ENCODE measurements at regions of chr10 and their contacts with region 1.

Region 1: GRCh38 chr10:104308439-104308903 is 29.8 kb downstream of the ITPRIP start:
- DNase-seq: peak; percentile 61
- ATAC-seq: peak; percentile 80
- H3K4me3 Mint-ChIP-seq: no peak overlapping the region
- H3K27ac Mint-ChIP-seq: peak overlapping the region; percentile 76
- H3K4me1 Mint-ChIP-seq: peaks cover 62% of the 10 kb centered on the region
- H3K27me3 Mint-ChIP-seq: no peaks in the 10 kb centered on the region

Region 2: DNA sequence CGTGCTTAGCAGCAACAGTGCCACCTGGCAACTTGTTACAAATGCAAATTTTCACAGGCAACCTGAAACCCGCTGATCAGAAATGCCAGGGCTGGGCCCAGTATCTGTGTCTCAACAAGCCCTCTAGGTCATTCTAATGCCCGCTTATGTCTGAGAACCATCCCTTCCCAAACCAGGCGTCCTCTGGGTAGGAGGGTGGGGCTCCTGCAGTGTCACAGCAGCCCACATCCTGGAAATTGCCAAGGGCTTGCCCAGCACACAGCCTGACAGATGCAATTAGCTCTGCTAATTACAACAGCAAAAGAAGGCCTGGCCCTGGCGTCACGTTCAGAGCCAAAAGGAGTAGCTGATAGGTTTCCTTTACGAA is 13.9 kb after region 1 on chr10:
- CTCF ChIA-PET with region 1: interaction called, 27 read pairs
- POLR2A ChIA-PET with region 1: interaction called, 6 read pairs
- intact Hi-C with region 1: no loop called
- DNase-seq: peak; percentile 64
- ATAC-seq: peak; percentile 64
- H3K4me3 Mint-ChIP-seq: peak overlapping the region; percentile 51
- H3K27ac Mint-ChIP-seq: peak overlapping the region; percentile 87
- H3K4me1 Mint-ChIP-seq: peaks cover 93% of the 10 kb centered on the region
- H3K27me3 Mint-ChIP-seq: no peaks in the 10 kb centered on the region

Region 3: DNA sequence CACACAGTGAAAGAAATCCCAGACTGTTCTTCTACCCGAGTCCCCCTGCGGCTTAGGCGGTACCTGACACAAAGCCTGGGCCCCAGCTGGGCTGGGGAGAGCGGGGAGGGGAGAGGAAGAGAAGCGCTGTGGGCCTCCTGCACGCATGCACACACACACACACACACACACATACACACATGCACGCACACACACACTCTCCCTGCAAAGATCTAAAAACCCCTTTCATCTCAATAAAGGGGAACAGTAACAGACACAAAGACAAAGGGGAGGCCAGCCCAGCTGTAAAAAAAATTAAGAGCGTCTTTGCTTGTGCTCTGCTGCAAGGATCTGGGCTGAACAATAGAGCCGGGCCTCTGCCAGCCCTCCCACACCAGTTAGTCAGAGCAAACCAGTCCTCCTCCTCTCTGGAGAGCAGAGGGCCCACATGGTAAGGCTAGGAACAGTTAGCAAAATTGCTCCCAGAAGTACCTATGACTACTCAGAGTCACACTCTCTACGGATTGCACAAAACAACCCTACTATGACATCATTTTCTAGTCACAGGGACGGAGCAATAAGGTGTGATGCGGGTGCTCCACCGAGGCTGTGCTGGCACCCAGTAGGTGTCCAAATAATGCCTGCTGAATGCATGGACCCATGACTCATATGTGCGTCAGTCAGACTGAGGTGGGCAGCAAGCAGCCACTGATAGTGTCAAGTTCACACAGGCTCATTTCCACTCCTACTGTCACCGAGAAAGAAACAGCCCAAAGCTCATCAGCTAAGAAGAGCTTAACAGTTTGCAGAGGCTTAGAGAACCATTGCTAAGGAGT is 20.6 kb after region 1 on chr10:
- CTCF ChIA-PET with region 1: interaction called, 54 read pairs
- POLR2A ChIA-PET with region 1: interaction called, 3 read pairs
- intact Hi-C with region 1: loop called (anchors 1 kb)
- DNase-seq: peak; percentile 89
- ATAC-seq: peak; percentile 92
- H3K4me3 Mint-ChIP-seq: peak overlapping the region; percentile 75
- H3K27ac Mint-ChIP-seq: peak overlapping the region; percentile 89
- H3K4me1 Mint-ChIP-seq: peaks cover 98% of the 10 kb centered on the region
- H3K27me3 Mint-ChIP-seq: no peaks in the 10 kb centered on the region

Region 4: DNA sequence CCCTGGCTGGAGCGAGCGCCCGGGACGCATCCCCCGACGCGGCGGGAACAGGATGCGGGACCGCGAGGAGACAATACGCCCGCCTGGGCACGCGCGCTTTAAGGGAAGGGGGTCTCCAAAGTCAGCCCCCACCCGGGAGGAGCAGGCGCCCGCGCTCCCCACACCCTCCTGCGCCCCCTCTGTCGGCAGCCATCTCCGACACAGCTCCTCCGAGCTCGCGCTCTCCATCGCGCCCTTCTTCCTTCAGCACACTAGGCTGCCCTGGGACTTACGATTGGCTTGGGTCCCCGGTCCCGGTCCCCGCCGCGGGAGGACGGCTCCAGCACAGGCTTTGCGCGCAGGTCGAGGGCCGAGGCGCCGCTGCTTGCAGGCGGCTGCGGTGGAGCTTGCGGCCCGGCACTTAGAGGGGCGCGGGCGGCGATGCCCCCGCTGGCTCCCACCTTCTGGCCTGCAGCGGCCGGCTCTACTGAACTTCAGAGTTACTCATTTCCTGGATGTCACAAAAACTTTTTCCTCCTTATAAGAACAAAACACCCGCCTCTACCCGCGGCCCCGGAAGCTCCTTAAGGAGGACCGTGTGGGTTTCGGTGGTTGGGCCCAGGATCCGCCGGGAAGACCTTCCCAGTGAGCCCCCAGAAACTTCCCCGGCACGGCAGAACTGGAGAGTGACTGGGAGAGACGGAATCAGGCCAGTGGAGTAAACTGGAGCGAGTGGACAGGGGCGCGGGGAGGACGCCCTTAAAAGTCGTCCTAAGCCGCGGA is 29.7 kb after region 1 on chr10 and contains the start of gene ITPRIP:
- CTCF ChIA-PET with region 1: interaction called, 54 read pairs
- POLR2A ChIA-PET with region 1: interaction called, 4 read pairs
- intact Hi-C with region 1: loop called (anchors 1 kb)
- DNase-seq: peak; percentile 82
- ATAC-seq: peak; percentile 78
- H3K4me3 Mint-ChIP-seq: peak within 1 kb of the TSS; percentile 93
- H3K27ac Mint-ChIP-seq: peak within 1 kb of the TSS; percentile 99
- H3K4me1 Mint-ChIP-seq: peaks cover 45% of the 10 kb centered on the region
- H3K27me3 Mint-ChIP-seq: no peaks in the 10 kb centered on the region
- total RNA-seq, gene ITPRIP: 20.3 to 21.6 TPM

Region 5: DNA sequence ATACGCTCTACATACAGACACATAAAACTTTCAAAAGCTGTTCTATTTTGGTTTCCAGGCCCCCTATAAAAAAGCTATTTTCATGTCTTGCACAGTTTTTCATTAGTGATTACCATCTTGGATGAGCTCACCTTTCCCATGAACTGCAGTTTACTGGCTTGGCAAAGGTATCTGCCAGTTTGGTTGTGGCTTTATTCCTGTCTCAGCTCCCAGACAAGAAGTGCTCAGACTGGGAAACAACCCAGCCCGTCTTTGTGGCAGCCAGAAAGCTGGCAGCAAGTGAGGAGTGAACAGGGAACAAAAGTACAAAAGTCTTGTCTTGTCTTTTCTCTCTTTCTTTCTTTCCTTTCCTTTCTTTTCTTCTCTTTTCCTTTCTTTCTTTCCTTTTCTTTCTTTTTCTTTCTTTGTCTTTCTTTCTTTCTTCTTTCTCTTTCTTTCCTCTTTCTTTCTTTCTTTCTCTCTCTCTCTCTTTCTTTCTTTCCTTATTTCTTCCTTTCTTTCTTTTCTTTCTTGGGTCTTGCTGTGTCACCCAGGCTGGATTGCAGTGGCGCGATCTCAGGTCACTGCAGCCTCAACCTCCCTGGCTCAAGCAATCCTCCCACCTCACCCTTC is 184.0 kb after region 1 on chr10:
- CTCF ChIA-PET with region 1: no interaction called
- POLR2A ChIA-PET with region 1: no interaction called
- intact Hi-C with region 1: no loop called
- DNase-seq: no peak
- ATAC-seq: no peak
- H3K4me3 Mint-ChIP-seq: no peak overlapping the region
- H3K27ac Mint-ChIP-seq: no peak overlapping the region
- H3K4me1 Mint-ChIP-seq: no peaks in the 10 kb centered on the region
- H3K27me3 Mint-ChIP-seq: no peaks in the 10 kb centered on the region

Region 6: GRCh38 chr10:105328503-105329133 is 1020.1 kb after region 1 on chr10:
- CTCF ChIA-PET with region 1: no interaction called
- POLR2A ChIA-PET with region 1: no interaction called
- intact Hi-C with region 1: no loop called
- DNase-seq: no peak
- ATAC-seq: no peak
- H3K4me3 Mint-ChIP-seq: no peak overlapping the region
- H3K27ac Mint-ChIP-seq: no peak overlapping the region
- H3K4me1 Mint-ChIP-seq: no peaks in the 10 kb centered on the region
- H3K27me3 Mint-ChIP-seq: peaks cover 5% of the 10 kb centered on the region

Measured in activated CD4-positive, alpha-beta T cell treated with anti-CD3 and anti-CD28 coated beads for 36 hours (primary cell).